Calu3 (cell line): ENCODE measurements at regions of chr1 and their contacts with region 1.

Region 1: GRCh38 chr1:77978969-77979876 is at the start of gene FUBP1:
- DNase-seq: peak; percentile 94
- H3K4me3 Mint-ChIP-seq: no peak within 1 kb of the TSS
- H3K27ac Mint-ChIP-seq: no peak within 1 kb of the TSS
- H3K4me1 Mint-ChIP-seq: peaks cover 31% of the 10 kb centered on the region
- H3K27me3 Mint-ChIP-seq: no peaks in the 10 kb centered on the region
- CTCF ChIP-seq: peak; percentile 77
- total RNA-seq, gene FUBP1: 165 and 188 TPM in 2 replicates

Region 2: GRCh38 chr1:77759071-77760028 is 219.9 kb before region 1 on chr1 and contains the start of gene USP33:
- CTCF ChIA-PET with region 1: no interaction called
- intact Hi-C with region 1: loop called (anchors 10 kb)
- DNase-seq: peak; percentile 95
- H3K4me3 Mint-ChIP-seq: peak within 1 kb of the TSS; percentile 92
- H3K27ac Mint-ChIP-seq: peak within 1 kb of the TSS; percentile 78
- H3K4me1 Mint-ChIP-seq: peaks cover 32% of the 10 kb centered on the region
- H3K27me3 Mint-ChIP-seq: no peaks in the 10 kb centered on the region
- CTCF ChIP-seq: no peak
- total RNA-seq, gene USP33: 52.9 and 61.7 TPM in 2 replicates

Region 3: DNA sequence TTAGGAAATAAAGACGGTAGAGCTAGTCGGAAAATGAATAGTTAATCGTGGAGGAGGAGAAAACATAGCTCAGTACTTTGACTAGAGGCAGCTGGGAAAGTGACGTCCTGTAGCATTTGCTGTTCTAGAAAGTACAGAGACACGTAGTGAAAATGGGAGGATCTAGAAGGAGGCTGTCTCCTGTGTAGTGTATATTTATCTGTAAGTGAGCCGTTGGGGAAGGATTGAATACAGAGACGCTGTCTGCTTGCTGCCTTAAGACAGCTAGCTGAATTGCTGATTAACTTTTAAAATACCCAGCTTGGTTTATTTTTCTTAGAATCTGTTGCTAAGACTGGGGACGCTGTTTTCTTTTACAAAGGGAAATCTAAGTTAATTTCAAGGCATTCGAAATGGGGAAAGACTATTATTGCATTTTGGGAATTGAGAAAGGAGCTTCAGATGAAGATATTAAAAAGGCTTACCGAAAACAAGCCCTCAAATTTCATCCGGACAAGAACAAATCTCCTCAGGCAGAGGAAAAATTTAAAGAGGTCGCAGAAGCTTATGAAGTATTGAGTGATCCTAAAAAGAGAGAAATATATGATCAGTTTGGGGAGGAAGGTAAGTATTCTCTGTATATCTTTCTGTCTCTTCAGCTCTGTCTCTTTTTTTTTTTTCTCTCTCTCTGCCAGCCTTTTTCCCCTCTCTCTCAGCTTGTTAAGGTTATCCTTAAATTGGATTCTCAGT is 25.7 kb after region 1 on chr1 and contains the start of gene DNAJB4:
- CTCF ChIA-PET with region 1: interaction called, 10 read pairs
- intact Hi-C with region 1: loop called (anchors 1 kb)
- DNase-seq: peak; percentile 60
- H3K4me3 Mint-ChIP-seq: peak within 1 kb of the TSS; percentile 75
- H3K27ac Mint-ChIP-seq: peak within 1 kb of the TSS; percentile 69
- H3K4me1 Mint-ChIP-seq: peaks cover 8% of the 10 kb centered on the region
- H3K27me3 Mint-ChIP-seq: no peaks in the 10 kb centered on the region
- CTCF ChIP-seq: no peak
- total RNA-seq, gene DNAJB4: 15.0 and 23.0 TPM in 2 replicates

Region 4: GRCh38 chr1:78028976-78029375 is 49.8 kb after region 1 on chr1:
- CTCF ChIA-PET with region 1: interaction called, 10 read pairs
- intact Hi-C with region 1: no loop called
- DNase-seq: no peak
- H3K4me3 Mint-ChIP-seq: no peak overlapping the region
- H3K27ac Mint-ChIP-seq: no peak overlapping the region
- H3K4me1 Mint-ChIP-seq: no peaks in the 10 kb centered on the region
- H3K27me3 Mint-ChIP-seq: no peaks in the 10 kb centered on the region
- CTCF ChIP-seq: no peak

Region 5: GRCh38 chr1:78045926-78046778 is 66.9 kb after region 1 on chr1 and contains the start of gene GIPC2:
- CTCF ChIA-PET with region 1: interaction called, 3 read pairs
- intact Hi-C with region 1: loop called (anchors 5 kb)
- DNase-seq: peak; percentile 36
- H3K4me3 Mint-ChIP-seq: peak within 1 kb of the TSS; percentile 77
- H3K27ac Mint-ChIP-seq: peak within 1 kb of the TSS; percentile 17
- H3K4me1 Mint-ChIP-seq: peaks cover 11% of the 10 kb centered on the region
- H3K27me3 Mint-ChIP-seq: peaks cover 33% of the 10 kb centered on the region
- CTCF ChIP-seq: no peak
- total RNA-seq, gene GIPC2: 2.1 and 2.8 TPM in 2 replicates

Region 6: DNA sequence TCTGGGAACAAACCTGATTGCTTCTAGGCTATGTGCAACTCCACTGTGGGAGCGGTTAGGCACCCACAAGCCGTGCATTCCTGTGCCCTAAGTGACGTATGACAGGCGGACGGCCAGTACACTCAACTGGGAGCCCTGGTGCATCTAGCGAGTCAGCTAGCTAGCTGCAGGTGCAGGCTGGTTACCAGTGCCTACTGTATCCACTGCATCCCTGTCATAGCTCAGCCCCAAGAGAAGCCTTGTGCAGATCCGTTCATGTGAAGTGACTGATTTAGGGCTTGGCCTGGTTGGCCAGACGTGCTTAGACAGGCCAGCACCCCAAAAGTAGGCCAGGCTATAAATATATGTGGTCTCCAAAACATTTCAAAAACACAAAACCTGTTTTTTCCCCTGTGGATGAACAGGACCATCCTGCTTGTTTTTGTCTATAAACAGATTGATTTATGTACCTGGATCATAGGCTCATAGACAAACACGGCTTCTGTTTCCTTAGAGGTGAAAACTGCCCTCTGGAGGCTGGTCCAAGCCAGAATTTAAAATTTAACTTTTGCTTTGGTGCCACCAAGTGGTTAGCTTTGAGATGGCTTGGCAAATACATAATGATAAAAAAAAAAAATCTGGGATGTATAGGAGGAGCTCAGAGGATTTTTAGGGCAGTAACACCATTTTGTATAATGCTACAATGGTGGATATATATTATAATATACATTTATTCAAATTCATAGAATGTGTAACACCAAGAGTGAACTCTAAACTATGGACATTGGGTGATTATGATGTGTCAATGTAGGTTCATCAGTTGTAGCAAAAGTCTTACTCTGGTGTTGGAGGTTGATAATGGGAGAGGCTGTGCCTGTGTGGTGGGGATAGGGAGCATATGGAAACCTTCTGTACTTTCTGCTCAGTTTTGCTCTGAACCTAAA is 135.1 kb after region 1 on chr1:
- CTCF ChIA-PET with region 1: interaction called, 8 read pairs
- intact Hi-C with region 1: loop called (anchors 2 kb)
- DNase-seq: peak; percentile 64
- H3K4me3 Mint-ChIP-seq: no peak overlapping the region
- H3K27ac Mint-ChIP-seq: no peak overlapping the region
- H3K4me1 Mint-ChIP-seq: no peaks in the 10 kb centered on the region
- H3K27me3 Mint-ChIP-seq: no peaks in the 10 kb centered on the region
- CTCF ChIP-seq: peak; percentile 74

Region 7: GRCh38 chr1:78223417-78224215 is 244.4 kb after region 1 on chr1:
- CTCF ChIA-PET with region 1: no interaction called
- intact Hi-C with region 1: no loop called
- DNase-seq: peak; percentile 20
- H3K4me3 Mint-ChIP-seq: peak overlapping the region; percentile 50
- H3K27ac Mint-ChIP-seq: peak overlapping the region; percentile 82
- H3K4me1 Mint-ChIP-seq: peaks cover 23% of the 10 kb centered on the region
- H3K27me3 Mint-ChIP-seq: no peaks in the 10 kb centered on the region
- CTCF ChIP-seq: no peak